Sigmoid colon (tissue), 7 donors: ENCODE measurements at regions of chr7 and their contacts with region 1.

Region 1: GRCh38 chr7:141533149-141533949 is 17.9 kb upstream of the AGK start:
- DNase-seq: peak; percentile 70
- H3K4me3 ChIP-seq: no peak overlapping the region
- H3K27ac ChIP-seq: peak overlapping the region in 1 of 4 donors; percentile 50
- H3K4me1 ChIP-seq: peaks cover 0 to 7% (median 3%) of the 10 kb centered on the region in 4 donors
- H3K27me3 ChIP-seq: no peaks in the 10 kb centered on the region
- CTCF ChIP-seq: peak; percentile 32 to 92 (median 80)
- EP300 ChIP-seq: no peak
- POLR2A ChIP-seq: no peak

Region 2: GRCh38 chr7:140673063-140673773 is 860.1 kb before region 1 on chr7:
- intact Hi-C with region 1: loop called (anchors 10 kb)
- DNase-seq: peak; percentile 70
- H3K4me3 ChIP-seq: peak overlapping the region; percentile 53 to 79 (median 74)
- H3K27ac ChIP-seq: peak overlapping the region; percentile 79 to 87 (median 82)
- H3K4me1 ChIP-seq: peaks cover 0 to 35% (median 29%) of the 10 kb centered on the region in 4 donors
- H3K27me3 ChIP-seq: no peaks in the 10 kb centered on the region
- CTCF ChIP-seq: no peak
- EP300 ChIP-seq: no peak
- POLR2A ChIP-seq: peak in 1 of 2 donors; percentile 35

Region 3: GRCh38 chr7:140810830-140811556 is 722.4 kb before region 1 on chr7:
- intact Hi-C with region 1: loop called (anchors 2 kb)
- DNase-seq: peak; percentile 64
- H3K4me3 ChIP-seq: no peak overlapping the region
- H3K27ac ChIP-seq: no peak overlapping the region
- H3K4me1 ChIP-seq: peaks cover 0 to 14% (median 5%) of the 10 kb centered on the region in 4 donors
- H3K27me3 ChIP-seq: no peaks in the 10 kb centered on the region
- CTCF ChIP-seq: peak; percentile 49 to 72 (median 57)
- EP300 ChIP-seq: no peak
- POLR2A ChIP-seq: no peak

Region 4: GRCh38 chr7:140924019-140924820 is 609.1 kb before region 1 on chr7:
- intact Hi-C with region 1: loop called (anchors 10 kb)
- DNase-seq: peak; percentile 88
- H3K4me3 ChIP-seq: peak overlapping the region; percentile 91 to 97 (median 96)
- H3K27ac ChIP-seq: peak overlapping the region; percentile 96 to 100 (median 100)
- H3K4me1 ChIP-seq: peaks cover 3 to 42% (median 23%) of the 10 kb centered on the region in 4 donors
- H3K27me3 ChIP-seq: no peaks in the 10 kb centered on the region
- CTCF ChIP-seq: peak in 2 of 4 experiments; percentile 26 to 34
- EP300 ChIP-seq: peak in 1 of 4 donors; percentile 5
- POLR2A ChIP-seq: no peak

Region 5: GRCh38 chr7:141072548-141073172 is 460.7 kb before region 1 on chr7:
- intact Hi-C with region 1: loop called (anchors 10 kb)
- DNase-seq: peak; percentile 78
- H3K4me3 ChIP-seq: peak overlapping the region; percentile 32 to 69 (median 58)
- H3K27ac ChIP-seq: peak overlapping the region; percentile 32 to 81 (median 69)
- H3K4me1 ChIP-seq: peaks cover 0 to 42% (median 38%) of the 10 kb centered on the region in 4 donors
- H3K27me3 ChIP-seq: peaks cover 0 to 24% (median 16%) of the 10 kb centered on the region in 3 donors
- CTCF ChIP-seq: no peak
- EP300 ChIP-seq: no peak
- POLR2A ChIP-seq: no peak

Region 6: DNA sequence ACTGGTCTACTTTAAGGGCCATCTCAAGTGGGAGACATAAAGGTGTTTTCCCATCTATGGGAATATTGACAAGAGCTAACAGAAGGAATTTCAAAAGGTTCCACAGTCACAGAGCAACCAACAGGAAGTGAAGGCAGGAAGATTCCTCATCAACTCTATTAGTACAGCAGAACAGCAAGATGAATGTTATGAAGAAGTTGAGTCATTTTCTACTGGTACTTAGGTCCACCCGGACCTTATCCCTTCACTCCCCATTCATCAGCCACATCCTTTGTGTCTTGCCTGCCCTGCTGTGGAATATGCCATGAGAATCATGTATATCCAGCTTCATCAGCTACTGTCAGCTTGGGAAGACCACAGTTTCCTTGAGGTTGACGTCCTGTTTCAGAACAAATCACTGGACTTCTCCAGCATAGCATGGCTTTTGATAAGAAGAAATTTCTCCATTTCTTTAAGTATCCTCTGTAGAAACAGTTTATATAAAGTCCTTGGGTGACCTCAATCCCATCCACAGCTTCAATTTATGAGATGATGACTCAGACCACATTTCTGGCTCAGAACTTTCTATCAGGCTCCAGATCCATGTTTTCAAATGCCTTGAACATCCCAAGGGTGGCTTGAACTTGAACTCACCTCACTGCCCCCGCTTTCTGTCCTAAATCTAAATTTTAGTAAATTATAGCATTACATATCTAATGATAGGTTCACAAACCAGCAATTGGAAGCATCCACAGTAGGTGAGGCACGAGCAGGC is 67.0 kb before region 1 on chr7:
- intact Hi-C with region 1: no loop called
- DNase-seq: no peak
- H3K4me3 ChIP-seq: no peak overlapping the region
- H3K27ac ChIP-seq: no peak overlapping the region
- H3K4me1 ChIP-seq: peaks cover 0 to 17% (median 7%) of the 10 kb centered on the region in 4 donors
- H3K27me3 ChIP-seq: no peaks in the 10 kb centered on the region
- CTCF ChIP-seq: no peak
- EP300 ChIP-seq: no peak
- POLR2A ChIP-seq: no peak

Region 7: DNA sequence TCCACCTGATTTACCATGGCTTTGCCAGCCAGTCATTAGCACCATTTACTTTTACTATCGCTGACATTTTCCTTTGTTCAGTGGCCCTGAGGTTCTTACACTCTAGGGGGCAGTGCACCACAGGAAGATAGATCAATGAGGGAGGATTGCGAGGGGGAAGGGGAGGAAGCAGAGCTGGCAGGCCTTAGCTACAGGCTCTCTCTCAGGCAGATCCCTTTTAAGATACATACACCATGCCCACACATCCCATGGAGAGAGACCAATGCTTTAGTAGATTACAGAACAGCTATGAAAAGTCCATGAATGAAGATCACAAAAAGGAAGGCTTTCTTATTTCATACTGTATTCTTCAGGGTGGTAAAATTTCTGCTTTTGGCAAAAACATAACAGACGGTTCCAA is 121.2 kb after region 1 on chr7:
- intact Hi-C with region 1: no loop called
- DNase-seq: no peak
- H3K4me3 ChIP-seq: no peak overlapping the region
- H3K27ac ChIP-seq: no peak overlapping the region
- H3K4me1 ChIP-seq: peaks cover 0 to 14% (median 7%) of the 10 kb centered on the region in 4 donors
- H3K27me3 ChIP-seq: no peaks in the 10 kb centered on the region
- CTCF ChIP-seq: peak in 3 of 4 experiments; percentile 43 to 55 (median 44)
- EP300 ChIP-seq: no peak
- POLR2A ChIP-seq: no peak

Region 8: GRCh38 chr7:141665208-141666035 is 132.1 kb after region 1 on chr7:
- intact Hi-C with region 1: no loop called
- DNase-seq: no peak
- H3K4me3 ChIP-seq: no peak overlapping the region
- H3K27ac ChIP-seq: no peak overlapping the region
- H3K4me1 ChIP-seq: no peaks in the 10 kb centered on the region
- H3K27me3 ChIP-seq: no peaks in the 10 kb centered on the region
- CTCF ChIP-seq: no peak
- EP300 ChIP-seq: no peak
- POLR2A ChIP-seq: no peak